Sciatic nerve (tissue), 2 donors: ENCODE measurements at regions of chr11 and their contacts with region 1.

Region 1: GRCh38 chr11:72831513-72832300 is 17.5 kb downstream of the ATG16L2 start:
- DNase-seq: peak; percentile 90
- ATAC-seq: peak; percentile 84

Region 2: GRCh38 chr11:72793425-72794367 is 38.0 kb before region 1 on chr11 and contains the start of gene STARD10:
- intact Hi-C with region 1: no loop called
- DNase-seq: peak; percentile 98
- ATAC-seq: peak; percentile 98
- total RNA-seq, gene STARD10: 27.2 TPM

Region 3: GRCh38 chr11:72864702-72865655 is 33.3 kb after region 1 on chr11:
- intact Hi-C with region 1: no loop called
- DNase-seq: no peak
- ATAC-seq: peak; percentile 86

Region 4: DNA sequence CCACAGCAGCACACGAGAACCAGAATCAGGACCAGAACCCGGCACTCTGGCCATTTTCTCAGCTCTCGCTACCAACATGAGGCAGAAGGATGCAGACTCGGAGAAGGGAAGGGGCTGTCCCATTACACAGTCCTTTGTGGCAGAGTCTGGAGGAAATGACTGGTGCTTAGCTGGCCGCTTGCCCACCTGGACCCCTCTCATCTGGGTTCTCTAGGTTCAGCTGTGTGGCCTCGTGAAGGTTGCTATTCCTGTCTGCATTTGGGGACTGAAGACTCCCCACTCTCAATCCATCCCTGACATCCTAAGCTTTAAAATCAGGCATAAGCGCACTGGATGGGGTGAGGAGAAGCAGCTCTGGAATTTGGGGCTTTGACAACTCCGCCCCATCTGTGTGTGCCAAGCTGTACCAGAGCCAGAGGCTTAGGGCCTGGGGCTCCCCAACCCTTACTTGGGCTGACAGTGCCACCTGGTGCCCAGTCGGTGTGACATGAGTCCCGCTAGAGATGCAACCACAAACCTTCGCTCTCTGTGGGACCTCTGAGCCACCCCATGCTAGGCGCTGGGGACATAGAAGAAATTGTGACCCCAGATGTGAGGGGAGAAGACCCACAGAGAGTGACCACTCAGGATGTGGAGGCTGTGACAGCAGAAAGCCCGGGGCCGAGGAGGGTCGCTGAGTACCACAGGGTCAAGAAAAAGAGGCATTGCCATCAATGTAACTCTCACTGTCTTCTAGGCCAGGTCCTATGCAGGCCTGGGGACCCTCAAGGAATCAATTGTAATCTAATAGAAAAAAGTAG is 346.3 kb after region 1 on chr11:
- intact Hi-C with region 1: loop called (anchors 5 kb)
- DNase-seq: peak; percentile 91
- ATAC-seq: peak; percentile 96

Region 5: DNA sequence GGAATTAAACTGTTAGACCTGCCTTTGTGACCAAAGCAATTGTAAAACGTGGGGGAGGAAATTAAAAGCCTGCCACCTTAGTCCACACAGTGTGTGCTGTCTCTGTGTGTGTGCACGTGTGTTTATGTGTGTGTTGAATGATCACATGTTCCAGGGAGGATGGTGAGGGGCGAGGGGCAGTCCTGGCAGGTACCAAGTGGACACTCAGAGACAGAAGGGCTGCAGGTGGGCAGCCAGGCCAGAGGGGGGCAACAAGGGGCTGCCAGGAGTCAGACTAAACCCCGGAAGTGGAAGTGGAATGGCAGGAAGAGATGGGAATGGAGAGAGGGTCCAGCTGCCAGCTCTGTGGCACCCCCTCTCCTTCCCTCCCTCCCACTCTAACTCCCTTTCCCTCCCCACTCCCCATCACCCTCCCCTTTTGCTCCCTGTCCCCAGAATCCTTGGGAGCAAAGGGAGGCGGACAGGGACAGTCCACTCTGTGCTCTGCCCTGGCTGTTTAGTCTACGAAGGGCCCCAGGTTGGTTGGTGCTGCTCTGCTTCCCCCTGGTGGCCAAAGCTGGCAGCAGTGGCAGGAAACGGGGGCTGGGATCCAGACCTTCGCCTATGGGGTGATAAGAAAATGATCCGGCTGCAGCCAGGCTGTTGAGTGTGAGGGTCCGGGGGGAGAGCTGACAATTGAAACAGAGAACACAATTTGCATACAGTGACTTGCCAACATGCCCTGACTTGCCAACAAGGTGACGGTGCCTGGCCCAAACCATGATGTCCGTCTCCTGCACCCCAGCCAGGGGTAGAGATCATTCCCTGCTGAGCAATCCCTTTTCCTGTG is 410.8 kb after region 1 on chr11:
- intact Hi-C with region 1: loop called (anchors 10 kb)
- DNase-seq: peak; percentile 81
- ATAC-seq: peak; percentile 83